ENCODE measurements at regions of chr21 and their contacts with region 1.

Region 1: GRCh38 chr21:14259747-14260146 is 43.8 kb downstream of the RBM11 start:
- DNase-seq: no peak
- ATAC-seq: peak; percentile 33
- H3K4me3 Mint-ChIP-seq: no peak overlapping the region
- H3K27ac Mint-ChIP-seq: no peak overlapping the region
- H3K4me1 Mint-ChIP-seq: peaks cover 5% of the 10 kb centered on the region
- H3K27me3 Mint-ChIP-seq: peaks cover 7% of the 10 kb centered on the region

Region 2: DNA sequence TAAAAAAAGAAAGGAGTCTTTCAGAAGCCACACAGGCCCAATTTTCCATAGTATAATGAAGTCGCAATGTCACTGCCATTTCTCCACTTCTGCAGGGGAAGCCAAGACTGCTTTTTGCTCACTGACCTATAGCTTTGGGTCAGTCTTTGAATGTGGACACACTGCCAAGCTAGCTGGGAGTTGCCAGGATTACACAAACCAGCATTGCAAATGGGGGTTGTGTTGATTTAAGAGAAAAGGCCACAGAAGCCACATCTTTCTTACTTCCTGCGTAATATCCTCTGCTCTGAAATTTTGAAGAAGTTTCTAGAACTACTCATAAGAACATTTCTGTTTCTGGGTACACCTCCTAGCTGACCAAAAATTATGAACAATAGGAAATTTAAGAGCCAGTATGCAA is 332.1 kb after region 1 on chr21:
- CTCF ChIA-PET with region 1: no interaction called
- POLR2A ChIA-PET with region 1: no interaction called
- intact Hi-C with region 1: no loop called
- DNase-seq: no peak
- ATAC-seq: peak; percentile 40
- H3K4me3 Mint-ChIP-seq: no peak overlapping the region
- H3K27ac Mint-ChIP-seq: peak overlapping the region; percentile 32
- H3K4me1 Mint-ChIP-seq: peaks cover 26% of the 10 kb centered on the region
- H3K27me3 Mint-ChIP-seq: no peaks in the 10 kb centered on the region

Region 3: DNA sequence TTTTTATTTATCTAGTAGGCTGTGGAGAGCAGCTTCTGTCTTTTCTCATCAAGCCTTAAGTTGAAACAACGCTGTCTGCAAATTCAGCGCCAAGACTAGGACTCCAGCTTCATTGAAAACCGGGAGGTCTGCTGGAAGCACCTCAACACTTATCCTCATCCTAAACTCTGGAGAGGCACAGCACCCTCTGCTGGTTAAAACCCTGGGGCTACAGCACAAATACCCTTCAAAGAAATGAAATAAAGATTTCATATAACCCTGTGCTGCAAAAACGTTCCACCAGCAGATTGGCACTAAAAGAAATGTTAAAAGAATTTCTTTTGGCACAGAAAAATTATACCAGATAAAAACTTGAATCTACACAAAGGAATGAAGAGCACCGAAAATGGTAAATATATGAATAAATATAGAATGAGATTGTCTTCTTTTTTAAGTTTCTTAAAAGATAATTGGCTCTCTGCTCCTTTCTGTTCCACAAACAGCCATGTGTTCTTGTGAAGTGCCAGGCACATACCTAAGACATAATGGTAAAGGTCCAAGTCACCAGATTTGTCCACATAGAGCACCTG is 514.1 kb after region 1 on chr21:
- CTCF ChIA-PET with region 1: no interaction called
- POLR2A ChIA-PET with region 1: no interaction called
- intact Hi-C with region 1: loop called (anchors 2 to 10 kb)
- DNase-seq: peak; percentile 75
- ATAC-seq: no peak
- H3K4me3 Mint-ChIP-seq: no peak overlapping the region
- H3K27ac Mint-ChIP-seq: no peak overlapping the region
- H3K4me1 Mint-ChIP-seq: no peaks in the 10 kb centered on the region
- H3K27me3 Mint-ChIP-seq: no peaks in the 10 kb centered on the region

Region 4: GRCh38 chr21:16095005-16095404 is 1835.3 kb after region 1 on chr21:
- CTCF ChIA-PET with region 1: no interaction called
- POLR2A ChIA-PET with region 1: no interaction called
- intact Hi-C with region 1: no loop called
- DNase-seq: no peak
- ATAC-seq: no peak
- H3K4me3 Mint-ChIP-seq: no peak overlapping the region
- H3K27ac Mint-ChIP-seq: no peak overlapping the region
- H3K4me1 Mint-ChIP-seq: no peaks in the 10 kb centered on the region
- H3K27me3 Mint-ChIP-seq: no peaks in the 10 kb centered on the region